ENCODE measurements at regions of chr16 and their contacts with region 1.

Region 1: GRCh38 chr16:74226338-74226954 is 70.2 kb upstream of the PSMD7 start:
- DNase-seq: no peak

Region 2: DNA sequence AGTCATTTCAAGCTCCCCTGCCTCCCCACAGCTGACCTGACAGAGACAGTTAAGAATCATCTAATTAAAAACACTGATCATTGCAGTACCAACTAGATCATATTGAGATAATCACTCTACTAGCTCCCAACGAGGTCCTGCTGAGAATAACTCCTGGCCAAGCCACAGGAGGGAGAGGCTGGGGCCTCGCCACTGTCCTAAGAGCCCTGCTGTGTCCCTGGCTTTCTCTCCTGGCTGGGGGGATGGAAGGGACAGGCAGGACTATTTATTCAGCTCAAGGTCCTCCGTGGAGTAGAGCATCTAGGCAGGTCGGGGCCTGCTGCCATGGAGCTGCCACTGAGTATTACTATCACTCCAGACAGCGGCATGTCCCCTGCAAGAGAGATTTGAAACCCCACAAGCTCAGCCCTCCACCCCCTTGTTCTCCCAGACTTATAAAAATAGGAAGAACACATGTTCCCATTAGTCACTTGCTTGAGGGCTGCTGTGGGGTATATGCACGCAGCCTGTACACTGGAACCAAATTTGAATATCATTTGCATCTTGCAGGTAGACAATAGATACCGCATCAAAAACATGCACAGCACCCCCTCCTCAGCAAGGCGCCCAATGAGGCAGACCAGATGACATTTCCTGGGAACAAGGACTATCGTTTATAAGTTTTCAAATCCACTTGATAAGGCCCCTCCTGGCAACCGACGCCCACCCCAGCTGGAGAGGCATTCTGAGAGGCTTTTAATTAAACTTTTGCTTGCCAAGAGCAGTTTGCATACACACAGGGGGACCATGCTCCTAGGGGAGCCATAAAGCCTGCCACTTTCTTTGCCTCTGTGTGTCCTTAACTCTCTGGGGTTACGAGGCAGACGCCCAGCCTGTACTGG is 793.4 kb before region 1 on chr16:
- intact Hi-C with region 1: no loop called
- DNase-seq: peak in 1 of 10 donors; percentile 16

Region 3: GRCh38 chr16:74064120-74064735 is 162.2 kb before region 1 on chr16:
- intact Hi-C with region 1: loop called (anchors 10 kb)
- DNase-seq: no peak

Measured in posterior cingulate gyrus (tissue), 11 donors.